Mammary epithelial cell (primary cell): ENCODE measurements at regions of chr17 and their contacts with region 1.

Region 1: DNA sequence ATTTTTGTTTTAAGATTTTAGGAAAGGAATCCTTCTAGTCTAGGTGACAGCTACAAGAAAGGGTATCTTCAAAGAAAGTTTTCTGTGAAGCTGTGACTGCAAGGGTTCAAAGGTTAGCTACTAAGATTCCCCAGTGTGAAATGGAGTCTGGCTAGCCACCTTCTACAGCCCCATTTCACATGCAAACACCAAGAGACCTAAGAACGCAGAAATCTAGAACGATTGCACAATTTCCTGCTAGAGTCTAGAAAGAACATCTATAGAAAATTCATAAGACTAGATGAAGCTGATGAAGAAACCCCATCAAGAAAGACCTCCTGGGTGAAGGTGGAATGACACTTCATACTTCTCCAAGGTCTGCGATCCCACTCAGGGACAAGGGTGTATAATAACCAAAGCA is 77.1 kb downstream of the STX8 start:
- DNase-seq: no peak
- H3K4me3 ChIP-seq: no peak overlapping the region
- H3K27ac ChIP-seq: no peak overlapping the region
- H3K4me1 ChIP-seq: no peaks in the 10 kb centered on the region
- H3K27me3 ChIP-seq: no peaks in the 10 kb centered on the region
- CTCF ChIP-seq: no peak

Region 2: GRCh38 chr17:9138101-9138717 is 360.3 kb before region 1 on chr17:
- CTCF ChIA-PET with region 1: no interaction called
- dilution Hi-C with region 1: no loop called
- in situ Hi-C with region 1: no loop called
- intact Hi-C with region 1: loop called (anchors 5 kb)
- DNase-seq: no peak
- H3K4me3 ChIP-seq: no peak overlapping the region
- H3K27ac ChIP-seq: no peak overlapping the region
- H3K4me1 ChIP-seq: no peaks in the 10 kb centered on the region
- H3K27me3 ChIP-seq: no peaks in the 10 kb centered on the region
- CTCF ChIP-seq: no peak

Region 3: DNA sequence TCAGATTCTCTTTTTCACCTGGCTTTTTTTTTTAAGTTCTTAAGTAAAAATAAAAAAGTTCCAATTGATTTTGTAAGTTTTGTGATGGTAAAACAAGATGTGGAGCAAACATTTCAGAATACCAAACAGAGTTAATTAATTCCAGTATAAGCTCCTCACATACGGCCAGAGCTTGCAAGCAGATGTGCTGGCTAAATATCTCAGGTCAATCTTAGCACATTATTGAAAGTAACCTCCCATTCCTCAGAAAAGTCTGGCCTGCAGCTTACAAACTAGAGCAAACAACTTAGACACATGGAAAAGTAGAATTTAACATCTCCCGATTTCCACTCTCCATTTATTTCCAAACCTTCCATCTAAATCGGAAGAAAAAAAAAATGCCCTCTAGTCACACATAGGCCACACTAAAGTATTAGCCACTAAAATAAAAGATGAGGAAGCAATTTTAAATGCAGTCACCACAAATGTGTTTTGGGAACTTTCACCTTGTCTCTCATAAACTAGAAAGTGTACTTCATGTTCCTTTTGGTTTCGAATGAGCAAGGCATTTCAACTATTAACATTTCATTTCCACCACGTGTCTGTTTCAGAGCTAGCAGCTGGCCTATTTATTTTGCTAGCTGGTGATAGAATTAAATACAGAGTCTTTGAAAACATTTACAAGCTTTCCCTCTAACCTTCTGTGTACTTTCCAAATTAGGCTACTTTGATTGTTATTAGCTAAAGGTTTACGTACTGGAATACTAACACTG is 66.2 kb before region 1 on chr17:
- CTCF ChIA-PET with region 1: no interaction called
- dilution Hi-C with region 1: no loop called
- in situ Hi-C with region 1: no loop called
- intact Hi-C with region 1: no loop called
- DNase-seq: no peak
- H3K4me3 ChIP-seq: no peak overlapping the region
- H3K27ac ChIP-seq: no peak overlapping the region
- H3K4me1 ChIP-seq: no peaks in the 10 kb centered on the region
- H3K27me3 ChIP-seq: no peaks in the 10 kb centered on the region
- CTCF ChIP-seq: no peak